HEK293T (cell line): ENCODE measurements at regions of chr14 and their contacts with region 1.

Region 1: GRCh38 chr14:51119003-51119402 is 24.1 kb upstream of the TRIM9 start:
- DNase-seq: no peak

Region 2: GRCh38 chr14:50573858-50574257 is 545.1 kb before region 1 on chr14:
- CTCF ChIA-PET with region 1: no interaction called
- POLR2A ChIA-PET with region 1: no interaction called
- DNase-seq: no peak

Region 3: DNA sequence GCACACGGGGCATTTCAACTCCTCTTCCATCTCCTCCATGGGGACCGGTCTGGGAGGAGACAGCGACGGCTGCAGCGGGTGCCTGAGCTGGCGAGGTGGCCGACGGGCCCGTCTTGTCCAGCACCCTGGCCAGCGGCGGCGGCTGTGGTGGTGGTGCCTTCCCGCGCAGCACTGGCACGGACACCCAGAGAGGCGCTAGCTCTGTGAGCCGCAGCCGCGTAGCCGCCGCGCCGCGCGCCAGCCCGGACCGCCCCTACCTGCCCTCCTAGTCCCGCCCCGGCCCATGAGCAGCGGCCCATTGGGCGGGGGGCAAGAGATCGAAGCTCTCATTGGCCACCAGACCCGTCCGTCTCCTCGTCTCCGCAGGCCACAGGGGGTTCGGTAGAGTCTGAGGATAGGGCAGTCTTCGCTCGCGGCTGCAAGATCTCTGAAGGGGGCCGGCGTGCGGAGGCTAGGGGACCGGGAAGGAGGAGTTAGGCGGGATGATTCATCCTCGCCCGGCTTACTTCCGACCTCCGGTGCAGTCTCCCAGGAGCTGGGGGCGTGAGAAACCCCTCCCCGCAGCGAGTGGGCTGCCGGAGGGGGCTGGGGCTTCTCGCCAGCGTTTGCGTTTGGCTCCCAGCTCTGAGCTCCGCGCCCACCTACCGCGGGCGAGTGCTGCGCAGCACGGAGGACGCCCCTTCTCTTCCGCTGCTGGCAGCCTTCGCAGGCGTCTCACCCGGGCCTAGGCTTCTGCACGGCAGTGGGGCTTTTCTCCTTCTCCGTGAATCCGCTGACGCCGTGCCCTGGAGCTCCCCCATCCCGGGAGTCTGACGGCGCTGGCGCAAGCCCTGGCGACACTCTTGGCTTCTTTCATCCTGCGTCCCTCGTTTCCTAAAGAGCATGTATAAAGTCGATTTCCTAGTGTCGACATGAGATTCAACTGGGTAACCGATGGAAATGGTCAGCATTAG is 23.8 kb before region 1 on chr14 and contains the start of gene TRIM9:
- CTCF ChIA-PET with region 1: interaction called, 6 read pairs
- POLR2A ChIA-PET with region 1: interaction called, 23 read pairs
- DNase-seq: peak; percentile 98

Region 4: GRCh38 chr14:51211149-51211548 is 92.1 kb after region 1 on chr14:
- CTCF ChIA-PET with region 1: no interaction called
- POLR2A ChIA-PET with region 1: no interaction called
- DNase-seq: no peak

Region 5: DNA sequence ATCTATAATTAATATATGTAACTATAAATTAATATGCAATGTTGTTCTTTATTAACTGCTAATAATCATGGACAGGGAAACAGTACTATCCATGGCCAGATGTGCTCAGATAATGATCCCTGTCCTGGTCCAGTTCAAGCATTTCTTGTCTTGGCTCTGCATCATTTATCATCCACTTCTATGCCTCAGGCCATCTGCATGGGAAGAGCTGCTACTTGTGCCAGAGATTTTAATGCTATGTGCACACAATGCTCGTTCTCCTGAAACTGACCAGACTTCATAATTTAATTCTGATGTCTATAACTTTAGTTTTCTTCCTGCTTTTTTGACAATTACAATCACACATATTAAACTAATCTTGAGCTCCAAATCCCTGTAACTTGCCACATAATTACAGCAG is 109.9 kb after region 1 on chr14:
- CTCF ChIA-PET with region 1: no interaction called
- POLR2A ChIA-PET with region 1: no interaction called
- DNase-seq: no peak